OCI-LY7 (cell line): ENCODE measurements at regions of chr3 and their contacts with region 1.

Region 1: DNA sequence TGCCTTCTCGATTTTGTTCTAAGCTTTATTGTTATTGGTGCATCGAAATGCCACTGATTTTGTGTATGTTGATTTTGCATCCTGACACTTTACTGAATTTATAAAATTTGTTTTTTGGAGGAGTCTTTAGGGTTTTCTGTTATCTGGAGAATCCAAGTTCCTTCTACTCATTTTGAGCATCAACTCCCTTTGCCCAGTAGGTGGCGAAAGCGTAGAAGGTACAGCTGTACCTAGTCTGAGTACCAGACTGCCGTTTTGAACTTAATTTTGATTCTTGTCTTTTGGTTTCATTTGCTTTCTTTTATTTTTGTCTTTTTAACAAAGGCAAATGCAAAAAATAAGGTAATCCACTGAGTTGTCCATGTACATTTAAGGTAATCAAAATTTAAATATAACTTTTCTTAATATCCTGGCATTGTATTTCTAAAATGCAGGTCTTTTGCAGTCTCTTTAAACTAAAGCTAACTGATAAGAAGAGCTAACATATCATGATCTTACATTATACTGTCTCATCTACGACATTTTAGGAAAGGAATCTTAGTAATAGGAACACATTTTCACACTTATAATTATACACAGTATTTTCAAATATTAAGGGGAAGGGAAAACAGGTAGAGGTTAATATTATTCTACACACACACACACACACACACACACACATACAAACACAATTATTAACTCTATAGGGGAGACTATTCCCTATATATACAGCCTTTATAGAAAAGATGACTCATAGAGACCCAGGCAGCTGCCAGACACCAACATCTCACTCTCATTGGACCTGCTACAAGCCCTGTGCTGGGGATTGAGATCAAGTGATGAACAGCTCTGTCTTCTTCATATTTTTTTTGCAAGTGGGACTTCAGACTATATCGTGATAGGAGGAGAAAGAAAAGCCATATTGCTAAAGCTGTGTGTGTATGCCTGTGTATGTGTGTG is 71.7 kb downstream of the SYNPR start:
- DNase-seq: peak; percentile 67
- H3K4me3 ChIP-seq: no peak overlapping the region
- H3K27ac ChIP-seq: no peak overlapping the region
- H3K4me1 ChIP-seq: no peaks in the 10 kb centered on the region
- CTCF ChIP-seq: peak; percentile 96

Region 2: DNA sequence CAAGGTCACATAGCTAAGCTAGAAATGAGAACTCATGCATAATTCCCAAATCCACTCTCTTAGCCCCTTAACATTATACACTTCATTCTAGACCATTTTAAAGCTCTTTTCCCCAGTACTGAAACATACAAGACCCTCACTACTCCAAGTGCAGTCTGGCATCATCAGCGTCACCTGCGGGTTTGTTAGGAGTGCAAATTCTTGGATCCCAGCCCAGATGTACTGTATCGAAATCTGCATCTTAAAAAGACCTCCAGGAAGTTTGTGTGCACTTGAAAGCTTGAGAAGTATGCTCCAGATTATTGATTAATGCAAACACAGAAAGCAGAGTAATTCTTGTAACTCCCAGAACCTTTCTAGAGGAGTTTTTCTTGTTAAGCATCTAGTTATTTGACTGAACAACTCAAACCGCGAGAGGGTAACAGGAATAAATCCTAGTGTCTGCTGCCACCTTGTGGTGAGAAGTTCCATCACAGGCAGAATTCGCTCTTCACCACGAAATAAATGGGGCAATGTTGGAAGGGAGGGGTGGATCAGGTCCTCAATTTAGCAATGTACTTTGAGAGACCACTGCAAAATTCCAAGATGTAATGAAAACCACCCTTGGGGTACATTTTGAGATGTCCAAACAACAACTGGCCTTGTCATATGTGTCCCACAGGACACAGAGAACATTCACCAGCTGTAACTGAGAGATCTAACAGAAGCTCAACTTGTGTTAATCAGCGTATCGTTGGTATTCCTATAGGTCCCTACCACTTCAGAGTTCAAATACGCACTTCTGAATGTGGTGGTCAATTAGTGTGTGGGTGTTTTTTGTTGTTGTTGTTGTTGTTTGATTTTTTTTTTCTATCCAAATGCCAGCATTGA is 468.7 kb after region 1 on chr3:
- CTCF ChIA-PET with region 1: interaction called, 3 read pairs
- POLR2A ChIA-PET with region 1: interaction called, 3 read pairs
- intact Hi-C with region 1: loop called (anchors 1 kb)
- DNase-seq: peak; percentile 68
- H3K4me3 ChIP-seq: no peak overlapping the region
- H3K27ac ChIP-seq: no peak overlapping the region
- H3K4me1 ChIP-seq: no peaks in the 10 kb centered on the region
- CTCF ChIP-seq: peak; percentile 93

Region 3: GRCh38 chr3:63937661-63938651 is 588.1 kb after region 1 on chr3:
- CTCF ChIA-PET with region 1: no interaction called
- POLR2A ChIA-PET with region 1: no interaction called
- intact Hi-C with region 1: no loop called
- DNase-seq: peak; percentile 23
- H3K4me3 ChIP-seq: no peak overlapping the region
- H3K27ac ChIP-seq: no peak overlapping the region
- H3K4me1 ChIP-seq: peaks cover 38% of the 10 kb centered on the region
- CTCF ChIP-seq: no peak; the same call in 1 of the 2 replicates